HCT116 (cell line): ENCODE measurements at regions of chr6 and their contacts with region 1.

Region 1: DNA sequence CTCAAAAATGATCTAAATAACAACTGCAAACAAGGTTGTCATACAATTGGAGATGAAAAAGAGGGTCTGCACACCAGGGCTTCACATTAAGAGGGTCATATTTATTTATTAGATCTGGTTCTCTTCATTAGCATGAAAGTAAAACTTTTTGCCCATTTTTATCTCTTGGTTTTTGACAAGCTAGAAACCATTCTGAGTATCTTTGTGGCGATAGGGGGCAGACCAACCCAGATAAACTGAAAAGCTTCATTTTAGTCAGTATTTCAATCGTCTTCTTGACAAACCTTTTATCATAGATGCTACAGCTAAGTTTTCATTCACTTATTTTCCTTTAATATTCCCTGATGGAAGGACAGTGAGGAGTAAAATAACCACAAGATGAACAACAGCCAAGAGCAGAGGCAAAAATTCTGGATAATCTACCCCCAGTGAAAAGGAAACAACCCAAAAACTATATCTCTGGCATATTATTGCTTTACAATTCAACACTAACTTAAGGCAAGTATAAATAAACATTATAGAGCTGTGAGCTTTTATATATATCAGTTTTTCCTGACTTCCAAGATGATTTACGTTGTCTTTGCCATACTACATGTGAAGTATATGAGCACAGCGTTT is 45.2 kb downstream of the THEMIS start:
- DNase-seq: no peak
- ATAC-seq: no peak
- H3K4me3 ChIP-seq: no peak overlapping the region
- H3K27ac ChIP-seq: no peak overlapping the region
- H3K4me1 ChIP-seq: no peaks in the 10 kb centered on the region
- H3K27me3 ChIP-seq: no peaks in the 10 kb centered on the region
- CTCF ChIP-seq: peak; percentile 39 to 63 (median 45); a peak in 4 of 6 replicates
- POLR2A ChIP-seq: no peak
- RAD21 ChIP-seq: peak; percentile 68

Region 2: GRCh38 chr6:127918506-127919427 is 63.1 kb after region 1 on chr6:
- CTCF ChIA-PET with region 1: no interaction called
- POLR2A ChIA-PET with region 1: no interaction called
- RAD21 ChIA-PET with region 1: no interaction called
- intact Hi-C with region 1: no loop called
- DNase-seq: no peak
- ATAC-seq: no peak
- H3K4me3 ChIP-seq: no peak overlapping the region
- H3K27ac ChIP-seq: no peak overlapping the region
- H3K4me1 ChIP-seq: no peaks in the 10 kb centered on the region
- H3K27me3 ChIP-seq: no peaks in the 10 kb centered on the region
- CTCF ChIP-seq: no peak
- POLR2A ChIP-seq: no peak
- RAD21 ChIP-seq: no peak

Region 3: GRCh38 chr6:128520436-128521281 is 665.0 kb after region 1 on chr6 and contains the start of gene PTPRK:
- CTCF ChIA-PET with region 1: interaction called, 7 read pairs
- POLR2A ChIA-PET with region 1: no interaction called
- RAD21 ChIA-PET with region 1: no interaction called
- intact Hi-C with region 1: loop called (anchors 10 kb)
- DNase-seq: peak; percentile 76
- ATAC-seq: peak; percentile 87
- H3K4me3 ChIP-seq: peak within 1 kb of the TSS; percentile 86 to 92
- H3K27ac ChIP-seq: peak within 1 kb of the TSS; percentile 84
- H3K4me1 ChIP-seq: peaks cover 10 to 22% of the 10 kb centered on the region in 2 experiments; a peak in 3 of 4 replicates
- H3K27me3 ChIP-seq: no peaks in the 10 kb centered on the region
- CTCF ChIP-seq: peak in 2 of 3 experiments; percentile 21 to 42; a peak in 2 of 6 replicates
- POLR2A ChIP-seq: peak; percentile 60
- RAD21 ChIP-seq: no peak
- total RNA-seq, gene PTPRK: 34.2 TPM

Region 4: GRCh38 chr6:128731249-128732165 is 875.9 kb after region 1 on chr6:
- CTCF ChIA-PET with region 1: interaction called, 14 read pairs
- POLR2A ChIA-PET with region 1: no interaction called
- RAD21 ChIA-PET with region 1: interaction called in 1 of 2 experiments, 4 read pairs
- intact Hi-C with region 1: loop called (anchors 5 kb)
- DNase-seq: peak; percentile 40
- ATAC-seq: peak; percentile 88
- H3K4me3 ChIP-seq: no peak overlapping the region
- H3K27ac ChIP-seq: no peak overlapping the region
- H3K4me1 ChIP-seq: no peaks in the 10 kb centered on the region
- H3K27me3 ChIP-seq: no peaks in the 10 kb centered on the region
- CTCF ChIP-seq: peak; percentile 55 to 74 (median 67)
- POLR2A ChIP-seq: no peak
- RAD21 ChIP-seq: peak; percentile 88